BJ (cell line): ENCODE measurements at regions of chr3 and their contacts with region 1.

Region 1: GRCh38 chr3:149603126-149604074 is 54.4 kb downstream of the WWTR1 start:
- DNase-seq: no peak
- H3K4me3 ChIP-seq: no peak overlapping the region
- H3K27me3 ChIP-seq: no peaks in the 10 kb centered on the region
- CTCF ChIP-seq: no peak

Region 2: GRCh38 chr3:149648525-149648924 is 45.1 kb after region 1 on chr3:
- CTCF ChIA-PET with region 1: no interaction called
- POLR2A ChIA-PET with region 1: no interaction called
- DNase-seq: no peak
- H3K4me3 ChIP-seq: no peak overlapping the region
- H3K27me3 ChIP-seq: no peaks in the 10 kb centered on the region
- CTCF ChIP-seq: no peak

Region 3: DNA sequence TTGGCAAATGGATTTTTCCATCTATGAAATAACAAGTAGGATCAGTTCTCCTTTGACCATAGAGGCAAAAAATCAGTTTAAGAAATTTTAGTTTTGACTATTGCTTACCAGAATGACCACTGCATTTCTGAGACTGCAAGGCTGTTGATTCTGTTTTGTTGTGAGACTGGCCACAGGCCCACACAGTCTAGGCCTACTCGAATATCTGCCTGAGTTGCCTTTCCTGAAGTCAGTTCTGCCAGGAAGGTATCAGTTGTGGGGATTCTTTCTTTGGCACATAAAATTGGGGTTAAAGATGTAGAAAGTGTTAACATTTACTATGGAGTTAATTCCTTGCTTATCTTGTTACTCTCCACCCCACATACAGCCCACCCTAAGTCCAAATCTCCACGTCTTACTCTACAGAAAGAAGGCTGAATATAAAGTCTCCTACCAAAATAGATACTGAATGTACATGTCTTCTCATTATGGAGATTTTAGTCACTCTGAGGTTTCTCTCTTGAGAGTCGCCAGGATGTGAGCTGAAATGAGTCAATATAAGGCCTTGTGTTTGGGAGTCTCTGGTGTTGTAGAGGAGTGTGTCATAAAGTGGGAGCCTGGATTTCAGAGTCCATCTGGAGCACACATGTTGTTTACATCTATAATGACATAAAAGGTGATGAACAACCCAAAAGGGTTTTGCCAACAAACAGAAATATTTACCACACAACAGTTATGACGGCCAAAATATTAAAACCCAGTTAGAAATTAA is 99.5 kb after region 1 on chr3:
- CTCF ChIA-PET with region 1: no interaction called
- POLR2A ChIA-PET with region 1: interaction called, 20 read pairs
- DNase-seq: peak; percentile 92
- H3K4me3 ChIP-seq: no peak overlapping the region
- H3K27me3 ChIP-seq: no peaks in the 10 kb centered on the region
- CTCF ChIP-seq: no peak